ENCODE measurements at regions of chr10 and their contacts with region 1.

Region 1: GRCh38 chr10:62492012-62492869 is 118.1 kb downstream of the ZNF365 start:
- DNase-seq: peak; percentile 65
- ATAC-seq: peak; percentile 53
- H3K4me3 ChIP-seq: no peak overlapping the region
- H3K4me3 Mint-ChIP-seq: no peak overlapping the region
- H3K27ac ChIP-seq: no peak overlapping the region
- H3K27ac Mint-ChIP-seq: no peak overlapping the region
- H3K4me1 ChIP-seq: peaks cover 9 to 11% of the 10 kb centered on the region in 2 donors
- H3K4me1 Mint-ChIP-seq: peaks cover 26% of the 10 kb centered on the region
- H3K27me3 ChIP-seq: no peaks in the 10 kb centered on the region
- H3K27me3 Mint-ChIP-seq: no peaks in the 10 kb centered on the region
- CTCF ChIP-seq: peak; percentile 85

Region 2: DNA sequence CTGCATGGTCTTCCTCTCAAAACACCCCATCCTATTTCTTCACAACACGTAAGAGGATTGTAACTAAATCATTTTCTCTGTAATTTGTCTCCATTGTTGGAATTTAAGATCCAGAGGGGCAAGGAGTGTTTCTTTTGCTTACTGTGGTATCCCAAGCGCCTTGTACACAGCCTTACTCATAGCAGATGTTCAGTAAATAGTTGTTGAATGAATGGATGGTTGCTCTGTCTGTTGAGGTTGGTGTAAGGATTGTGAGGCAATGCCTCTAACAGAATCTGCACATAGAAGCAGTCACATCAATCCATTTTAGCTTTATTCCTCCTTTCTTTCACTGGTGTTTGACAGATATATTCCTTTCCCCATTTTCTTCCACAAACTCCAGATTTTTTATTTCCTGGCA is 27.9 kb before region 1 on chr10:
- CTCF ChIA-PET with region 1: interaction called, 11 read pairs
- POLR2A ChIA-PET with region 1: no interaction called
- intact Hi-C with region 1: loop called (anchors 5 kb)
- DNase-seq: no peak
- ATAC-seq: no peak
- H3K4me3 ChIP-seq: no peak overlapping the region
- H3K4me3 Mint-ChIP-seq: no peak overlapping the region
- H3K27ac ChIP-seq: no peak overlapping the region
- H3K27ac Mint-ChIP-seq: no peak overlapping the region
- H3K4me1 ChIP-seq: no peaks in the 10 kb centered on the region
- H3K4me1 Mint-ChIP-seq: no peaks in the 10 kb centered on the region
- H3K27me3 ChIP-seq: no peaks in the 10 kb centered on the region
- H3K27me3 Mint-ChIP-seq: peaks cover 6% of the 10 kb centered on the region
- CTCF ChIP-seq: no peak

Region 3: DNA sequence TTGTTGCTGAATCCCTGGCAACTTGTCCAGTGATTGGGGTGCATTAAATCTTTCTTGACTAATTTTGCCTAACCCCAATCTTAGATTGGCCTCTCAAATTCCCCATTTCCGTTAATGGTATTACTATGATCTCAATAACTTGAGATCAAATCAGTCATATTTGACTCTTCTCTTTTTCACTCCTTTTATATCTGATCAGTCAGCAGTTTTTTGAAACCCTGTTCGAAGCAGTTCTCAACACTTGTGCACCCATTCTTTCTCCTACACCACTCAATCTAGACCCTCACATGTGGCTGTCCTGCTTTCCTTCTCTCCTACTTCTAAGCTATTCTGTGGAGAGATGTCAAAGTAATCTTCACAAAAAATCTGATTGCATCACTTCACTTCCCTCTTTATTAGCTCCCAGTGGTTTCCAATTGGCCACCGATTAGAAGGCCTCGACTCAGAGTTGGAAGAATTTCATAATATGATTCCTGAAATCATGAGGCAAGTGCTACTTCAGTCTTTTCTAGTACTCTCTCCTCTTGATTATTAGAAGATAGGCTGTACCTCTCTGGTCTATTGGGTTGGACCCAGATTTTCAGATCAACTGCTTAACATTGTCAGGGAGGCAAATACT is 10.9 kb after region 1 on chr10:
- CTCF ChIA-PET with region 1: interaction called, 40 read pairs
- POLR2A ChIA-PET with region 1: no interaction called
- intact Hi-C with region 1: no loop called
- DNase-seq: no peak
- ATAC-seq: no peak
- H3K4me3 ChIP-seq: no peak overlapping the region
- H3K4me3 Mint-ChIP-seq: no peak overlapping the region
- H3K27ac ChIP-seq: no peak overlapping the region
- H3K27ac Mint-ChIP-seq: no peak overlapping the region
- H3K4me1 ChIP-seq: peaks cover 6 to 7% of the 10 kb centered on the region in 2 donors
- H3K4me1 Mint-ChIP-seq: peaks cover 19% of the 10 kb centered on the region
- H3K27me3 ChIP-seq: no peaks in the 10 kb centered on the region
- H3K27me3 Mint-ChIP-seq: no peaks in the 10 kb centered on the region
- CTCF ChIP-seq: no peak

Region 4: GRCh38 chr10:62545160-62546066 is 53.2 kb after region 1 on chr10:
- CTCF ChIA-PET with region 1: interaction called, 11 read pairs
- POLR2A ChIA-PET with region 1: no interaction called
- intact Hi-C with region 1: loop called (anchors 2 kb)
- DNase-seq: no peak
- ATAC-seq: peak; percentile 21
- H3K4me3 ChIP-seq: no peak overlapping the region
- H3K4me3 Mint-ChIP-seq: peak overlapping the region; percentile 0
- H3K27ac ChIP-seq: no peak overlapping the region
- H3K27ac Mint-ChIP-seq: peak overlapping the region; percentile 46
- H3K4me1 ChIP-seq: peaks cover 39 to 43% of the 10 kb centered on the region in 2 donors
- H3K4me1 Mint-ChIP-seq: peaks cover 61% of the 10 kb centered on the region
- H3K27me3 ChIP-seq: no peaks in the 10 kb centered on the region
- H3K27me3 Mint-ChIP-seq: no peaks in the 10 kb centered on the region
- CTCF ChIP-seq: no peak

Region 5: DNA sequence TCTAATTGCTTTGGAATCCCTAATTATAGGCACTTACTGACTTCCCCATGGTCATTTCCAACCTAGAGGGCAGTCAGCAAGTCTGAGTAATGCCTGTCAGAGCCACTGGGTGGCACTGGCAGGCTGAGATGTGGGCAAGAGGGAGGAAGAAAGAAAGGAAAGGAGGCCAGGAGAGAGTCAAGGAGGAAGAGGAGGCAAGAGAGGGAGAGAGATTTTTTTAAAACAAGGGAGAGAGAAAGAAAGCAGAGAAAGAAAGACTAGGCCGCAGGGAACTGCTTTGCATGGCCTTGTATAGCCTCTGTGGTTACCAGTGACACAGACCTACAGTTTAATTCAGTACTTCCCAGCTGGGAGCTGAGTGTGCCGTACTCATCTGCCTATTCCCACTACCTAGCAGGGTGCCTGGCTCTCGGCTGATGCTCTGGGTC is 101.9 kb after region 1 on chr10:
- CTCF ChIA-PET with region 1: interaction called, 69 read pairs
- POLR2A ChIA-PET with region 1: no interaction called
- intact Hi-C with region 1: loop called (anchors 1 kb)
- DNase-seq: peak; percentile 74
- ATAC-seq: peak; percentile 89
- H3K4me3 ChIP-seq: no peak overlapping the region
- H3K4me3 Mint-ChIP-seq: no peak overlapping the region
- H3K27ac ChIP-seq: no peak overlapping the region
- H3K27ac Mint-ChIP-seq: no peak overlapping the region
- H3K4me1 ChIP-seq: peaks cover 7 to 10% of the 10 kb centered on the region in 2 donors
- H3K4me1 Mint-ChIP-seq: peaks cover 7% of the 10 kb centered on the region
- H3K27me3 ChIP-seq: no peaks in the 10 kb centered on the region
- H3K27me3 Mint-ChIP-seq: no peaks in the 10 kb centered on the region
- CTCF ChIP-seq: peak; percentile 88

Region 6: GRCh38 chr10:63083904-63084689 is 591.9 kb after region 1 on chr10:
- CTCF ChIA-PET with region 1: interaction called, 33 read pairs
- POLR2A ChIA-PET with region 1: no interaction called
- intact Hi-C with region 1: loop called (anchors 1 kb)
- DNase-seq: peak; percentile 75
- ATAC-seq: peak; percentile 86
- H3K4me3 ChIP-seq: no peak overlapping the region
- H3K4me3 Mint-ChIP-seq: no peak overlapping the region
- H3K27ac ChIP-seq: no peak overlapping the region
- H3K27ac Mint-ChIP-seq: no peak overlapping the region
- H3K4me1 ChIP-seq: no peaks in the 10 kb centered on the region
- H3K4me1 Mint-ChIP-seq: no peaks in the 10 kb centered on the region
- H3K27me3 ChIP-seq: no peaks in the 10 kb centered on the region
- H3K27me3 Mint-ChIP-seq: peaks cover 10% of the 10 kb centered on the region
- CTCF ChIP-seq: peak; percentile 82